ENCODE measurements at regions of chr3 and their contacts with region 1.

Region 1: DNA sequence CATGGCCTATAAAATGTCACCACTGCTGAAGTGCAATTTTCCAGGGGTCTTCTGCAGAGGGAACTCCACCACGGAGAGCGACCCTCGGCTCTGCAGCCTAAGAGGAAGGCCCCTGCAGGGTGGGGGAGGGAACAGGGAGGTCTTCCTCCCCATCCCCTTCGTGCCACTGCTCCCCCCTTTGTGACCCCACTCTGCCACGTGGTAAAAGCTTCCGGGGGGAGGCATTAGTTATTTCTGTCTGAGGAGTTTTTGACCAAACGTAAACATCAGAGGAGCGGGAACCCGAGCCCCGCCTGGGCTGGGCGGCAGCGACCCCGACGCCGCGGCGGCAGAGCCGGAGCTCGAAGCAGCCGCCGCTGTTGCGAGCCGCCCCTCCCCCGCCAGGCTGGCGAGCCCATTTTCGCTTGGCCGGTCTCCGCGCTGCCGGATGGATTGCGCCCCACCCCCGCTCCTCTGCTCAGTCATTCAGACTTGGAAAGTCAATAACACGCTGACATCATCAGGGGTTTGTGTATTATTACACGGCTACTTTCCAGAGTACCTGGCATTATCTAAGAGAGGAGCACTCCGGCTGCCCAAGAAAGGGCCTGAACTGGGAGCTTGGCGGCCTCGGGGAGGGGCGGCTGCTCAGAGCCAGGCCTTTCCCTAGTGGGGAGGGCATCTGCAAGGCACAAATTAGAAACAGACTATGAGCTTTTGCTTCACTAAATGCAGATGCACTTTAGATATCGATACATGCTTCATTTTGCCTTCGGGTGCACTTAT is 162.5 kb upstream of the TBL1XR1 start:
- DNase-seq: peak; percentile 98
- H3K4me3 ChIP-seq: peak overlapping the region; percentile 49
- H3K27ac ChIP-seq: peak overlapping the region; percentile 96
- H3K4me1 ChIP-seq: peaks cover 70% of the 10 kb centered on the region
- H3K27me3 ChIP-seq: no peaks in the 10 kb centered on the region
- CTCF ChIP-seq: no peak

Region 2: GRCh38 chr3:177050501-177051237 is 309.1 kb before region 1 on chr3:
- CTCF ChIA-PET with region 1: interaction called, 3 read pairs
- POLR2A ChIA-PET with region 1: interaction called, 5 read pairs
- intact Hi-C with region 1: loop called (anchors 1 kb)
- DNase-seq: peak in 1 of 2 experiments; percentile 59
- H3K4me3 ChIP-seq: no peak overlapping the region
- H3K27ac ChIP-seq: peak overlapping the region; percentile 40
- H3K4me1 ChIP-seq: peaks cover 15% of the 10 kb centered on the region
- H3K27me3 ChIP-seq: no peaks in the 10 kb centered on the region
- CTCF ChIP-seq: peak; percentile 90

Region 3: GRCh38 chr3:177345049-177345972 is 14.5 kb before region 1 on chr3:
- CTCF ChIA-PET with region 1: interaction called, 4 read pairs
- POLR2A ChIA-PET with region 1: no interaction called
- intact Hi-C with region 1: loop called (anchors 1 kb)
- DNase-seq: peak; percentile 93 to 98
- H3K4me3 ChIP-seq: peak overlapping the region; percentile 6; the same call in 1 of the 2 replicates
- H3K27ac ChIP-seq: peak overlapping the region; percentile 87
- H3K4me1 ChIP-seq: peaks cover 28% of the 10 kb centered on the region
- H3K27me3 ChIP-seq: no peaks in the 10 kb centered on the region
- CTCF ChIP-seq: no peak

Region 4: DNA sequence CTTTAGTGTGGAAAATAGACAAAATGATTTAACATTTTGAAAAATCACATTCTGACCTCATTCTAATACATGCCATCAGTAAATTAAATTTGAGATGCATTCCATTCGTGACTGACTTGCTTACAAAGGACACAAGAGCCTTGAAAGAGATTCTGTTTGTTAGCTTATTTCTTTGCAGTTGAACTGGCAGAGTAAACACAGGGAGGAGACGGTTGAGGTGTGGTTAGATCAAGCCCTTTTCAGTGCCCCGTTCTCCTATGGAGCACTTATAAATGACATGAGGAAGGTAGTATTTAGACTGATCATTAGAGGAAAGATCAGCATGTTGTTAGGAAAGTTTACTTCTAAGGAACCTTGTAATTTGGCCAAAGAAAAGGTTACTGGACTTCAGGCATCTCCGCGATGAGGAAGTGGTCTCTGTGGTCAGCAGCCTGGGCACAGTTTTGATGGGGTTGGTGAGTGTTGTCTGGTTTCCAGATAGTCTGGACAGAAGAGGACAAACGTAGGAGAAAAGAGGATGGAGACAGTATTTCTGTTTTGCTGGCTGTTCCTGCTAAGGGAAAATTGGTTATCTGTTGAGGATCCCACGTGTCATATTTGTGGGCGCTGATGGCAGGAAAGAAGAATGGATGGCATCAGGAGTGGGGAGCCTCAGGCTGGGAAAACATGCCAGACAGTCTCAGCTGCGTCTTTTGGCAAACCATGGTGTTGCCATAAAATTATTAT is 166.4 kb after region 1 on chr3:
- CTCF ChIA-PET with region 1: no interaction called
- POLR2A ChIA-PET with region 1: interaction called, 3 read pairs
- intact Hi-C with region 1: loop called (anchors 1 kb)
- DNase-seq: peak; percentile 25 to 87
- H3K4me3 ChIP-seq: no peak overlapping the region
- H3K27ac ChIP-seq: no peak overlapping the region
- H3K4me1 ChIP-seq: peaks cover 79% of the 10 kb centered on the region
- H3K27me3 ChIP-seq: no peaks in the 10 kb centered on the region
- CTCF ChIP-seq: no peak

Region 5: GRCh38 chr3:177777699-177778098 is 417.9 kb after region 1 on chr3:
- CTCF ChIA-PET with region 1: no interaction called
- POLR2A ChIA-PET with region 1: no interaction called
- intact Hi-C with region 1: loop called (anchors 1 kb)
- DNase-seq: peak; percentile 28 to 44
- H3K4me3 ChIP-seq: no peak overlapping the region
- H3K27ac ChIP-seq: no peak overlapping the region
- H3K4me1 ChIP-seq: peaks cover 24% of the 10 kb centered on the region
- H3K27me3 ChIP-seq: no peaks in the 10 kb centered on the region
- CTCF ChIP-seq: peak; percentile 56

Region 6: DNA sequence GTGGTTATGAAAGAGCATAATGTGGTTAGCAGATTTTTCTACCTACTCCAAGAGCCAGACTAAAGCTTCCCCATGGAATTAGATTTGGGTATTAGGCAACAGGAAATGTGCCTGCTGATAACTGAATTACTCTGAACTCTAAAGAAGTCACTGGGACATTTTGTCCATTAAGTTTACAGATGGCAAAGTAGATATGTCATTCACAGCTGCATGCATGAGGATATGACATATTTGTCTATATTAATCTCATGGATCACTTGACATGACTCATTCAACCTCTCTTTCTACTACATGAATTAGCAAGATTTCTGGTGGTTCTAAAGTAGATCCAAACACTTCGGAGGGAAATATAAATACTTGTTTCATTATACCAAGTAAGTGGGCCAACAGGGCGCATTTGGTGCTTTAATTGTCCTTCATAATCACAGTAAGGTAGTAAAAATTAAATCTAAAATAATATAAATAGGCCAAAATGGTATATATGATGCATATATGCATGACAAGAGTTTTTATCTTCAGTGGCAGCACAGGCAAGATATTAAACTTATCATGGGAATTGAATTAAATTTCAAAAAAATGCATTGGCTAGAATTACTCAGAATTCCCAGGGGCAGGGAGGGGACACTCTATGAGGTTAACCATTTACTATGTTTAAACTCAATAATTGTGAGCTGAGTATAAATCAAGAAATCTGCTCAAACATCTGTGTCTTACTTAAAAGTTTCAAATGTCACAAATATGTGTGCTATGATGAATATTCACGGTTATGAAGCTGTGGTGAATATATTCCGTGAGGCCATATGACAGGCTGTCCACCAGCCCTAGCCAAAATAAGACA is 811.1 kb after region 1 on chr3:
- CTCF ChIA-PET with region 1: no interaction called
- POLR2A ChIA-PET with region 1: no interaction called
- intact Hi-C with region 1: loop called (anchors 5 kb)
- DNase-seq: peak; percentile 22 to 95
- H3K4me3 ChIP-seq: no peak overlapping the region
- H3K27ac ChIP-seq: peak overlapping the region; percentile 51
- H3K4me1 ChIP-seq: peaks cover 20% of the 10 kb centered on the region
- H3K27me3 ChIP-seq: no peaks in the 10 kb centered on the region
- CTCF ChIP-seq: no peak

Measured in PC-9 (cell line).